ENCODE measurements at regions of chr1 and their contacts with region 1.

Region 1: GRCh38 chr1:183983371-183984105 is 54.0 kb downstream of the COLGALT2 start:
- DNase-seq: peak in 9 of 10 donors; percentile 15 to 83 (median 74)
- H3K4me3 ChIP-seq: peak overlapping the region in 38 of 59 donors; percentile 1 to 47 (median 19)
- H3K27ac ChIP-seq: peak overlapping the region; percentile 89 to 99 (median 96)
- H3K27me3 ChIP-seq: no peaks in the 10 kb centered on the region
- CTCF ChIP-seq: no peak

Region 2: DNA sequence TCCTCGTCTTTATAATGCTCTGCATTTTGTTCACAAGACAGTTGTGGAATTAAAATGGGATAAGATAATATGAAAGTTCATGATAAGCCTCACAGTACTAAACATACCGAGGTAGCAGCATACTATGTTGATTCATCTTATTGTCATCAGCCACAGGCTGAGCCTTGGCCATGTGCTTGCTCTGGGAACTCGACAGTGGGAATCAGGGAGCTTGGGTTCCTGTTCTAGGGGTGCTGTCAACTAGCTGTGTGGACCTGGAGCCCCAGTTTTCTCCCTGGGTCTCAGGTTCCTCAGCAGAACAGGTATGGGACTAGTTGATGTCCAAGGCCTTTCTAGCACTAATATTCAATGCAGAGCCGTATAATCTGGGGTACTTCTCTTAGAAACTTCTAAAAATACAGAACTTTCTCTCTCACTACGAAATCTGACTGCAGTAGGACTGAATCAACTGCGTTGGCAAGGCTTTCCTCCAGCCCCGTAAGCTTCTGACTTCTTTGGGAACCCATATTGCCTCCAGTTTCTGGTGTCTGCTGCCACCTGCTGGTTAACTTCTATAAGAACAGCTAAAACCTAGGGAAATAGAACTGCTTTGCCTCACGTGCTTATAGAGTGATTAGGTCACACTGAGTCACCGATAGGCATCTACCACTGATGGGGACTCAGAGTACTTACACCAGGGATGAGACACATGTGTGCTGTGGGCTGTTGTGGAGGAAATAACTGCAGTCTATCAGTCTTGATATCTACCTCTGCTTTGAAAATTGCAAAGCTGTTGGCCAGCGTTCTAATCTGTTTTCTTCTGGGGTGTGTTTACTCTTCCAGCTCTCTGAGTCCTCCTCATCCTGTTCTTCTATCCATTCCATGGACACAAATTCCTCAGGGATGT is 67.7 kb before region 1 on chr1:
- intact Hi-C with region 1: no loop called
- DNase-seq: peak in 8 of 10 donors; percentile 65 to 82 (median 72)
- H3K4me3 ChIP-seq: peak overlapping the region in 17 of 59 donors; percentile 4 to 44 (median 21)
- H3K27ac ChIP-seq: peak overlapping the region; percentile 20 to 100 (median 96)
- H3K27me3 ChIP-seq: no peaks in the 10 kb centered on the region
- CTCF ChIP-seq: peak; percentile 88 to 100 (median 95)

Region 3: DNA sequence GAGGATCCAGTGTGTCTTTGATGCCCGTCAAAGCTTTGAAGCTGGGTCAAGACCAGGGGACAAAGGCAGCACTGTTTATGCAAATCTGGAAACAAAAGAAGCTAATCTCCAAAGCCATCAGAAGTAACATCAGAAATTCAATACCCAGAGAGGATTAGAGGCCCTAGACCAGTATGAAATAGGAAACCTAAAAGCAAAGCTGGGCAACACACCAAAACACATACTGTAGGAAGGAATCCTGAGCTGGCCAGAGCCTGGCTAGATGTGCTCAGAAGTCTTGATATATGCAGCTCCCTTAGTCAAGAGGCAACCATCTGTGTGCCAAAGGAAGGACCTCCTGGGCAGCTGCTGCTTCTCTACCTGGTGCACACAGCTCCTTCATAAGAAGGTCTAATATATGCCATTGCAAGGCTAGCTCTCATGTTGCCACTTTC is 41.7 kb after region 1 on chr1:
- intact Hi-C with region 1: loop called (anchors 5 to 10 kb)
- DNase-seq: no peak
- H3K4me3 ChIP-seq: peak overlapping the region in 1 of 59 donors; percentile 6
- H3K27ac ChIP-seq: peak overlapping the region in 58 of 59 donors; percentile 16 to 100 (median 90)
- H3K27me3 ChIP-seq: no peaks in the 10 kb centered on the region
- CTCF ChIP-seq: peak in 1 of 56 donors; percentile 12